ENCODE measurements at regions of chr9 and their contacts with region 1.

Region 1: DNA sequence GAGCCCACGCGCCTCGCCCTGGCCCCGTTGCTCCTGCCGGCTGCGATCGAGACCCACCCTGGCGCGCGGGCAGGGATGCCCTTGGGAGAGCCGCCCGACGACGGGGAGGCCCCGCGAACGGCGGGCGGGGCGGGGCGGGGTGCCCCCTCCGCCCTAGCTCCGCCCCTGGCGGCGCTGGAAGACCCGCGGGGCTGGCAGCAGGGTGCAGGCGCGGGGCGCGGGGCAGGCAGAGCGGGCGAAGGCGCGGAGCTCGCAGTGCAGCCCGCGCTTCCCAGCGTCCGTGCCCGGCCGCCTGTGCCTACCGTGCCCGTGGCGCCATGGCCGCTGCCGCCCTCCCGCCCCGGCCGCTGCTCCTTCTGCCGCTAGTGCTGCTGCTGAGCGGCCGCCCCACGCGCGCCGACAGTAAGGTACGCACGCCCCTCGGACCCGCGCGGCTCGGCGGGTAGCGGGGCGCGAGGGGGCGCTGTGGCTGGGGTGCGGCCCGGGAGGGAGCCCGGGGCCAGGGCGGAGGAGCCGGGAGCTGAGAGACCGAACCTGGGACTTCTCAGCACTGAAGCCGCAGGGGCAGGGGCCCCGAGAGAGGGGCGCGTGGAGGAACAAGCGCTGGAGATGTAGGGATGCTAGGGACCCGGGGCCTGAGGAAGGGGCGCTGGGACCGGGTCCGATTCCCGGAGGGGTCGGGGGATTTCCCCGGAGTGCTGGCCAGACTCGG is at the start of gene OLFML2A:
- DNase-seq: no peak
- ATAC-seq: peak; percentile 66
- H3K4me3 ChIP-seq: peak within 1 kb of the TSS; percentile 48 to 64
- H3K27ac ChIP-seq: peak within 1 kb of the TSS; percentile 44; the same call in 1 of the 2 replicates
- H3K4me1 ChIP-seq: peaks cover 17 to 40% of the 10 kb centered on the region in 2 experiments
- H3K27me3 ChIP-seq: no peaks in the 10 kb centered on the region
- CTCF ChIP-seq: peak in 2 of 3 experiments; percentile 44 to 53; a peak in 3 of 6 replicates
- POLR2A ChIP-seq: no peak
- RAD21 ChIP-seq: no peak
- total RNA-seq, gene OLFML2A: 6.3 TPM

Region 2: GRCh38 chr9:124818431-124819281 is 41.5 kb after region 1 on chr9:
- CTCF ChIA-PET with region 1: interaction called, 10 read pairs
- POLR2A ChIA-PET with region 1: interaction called, 6 read pairs
- RAD21 ChIA-PET with region 1: interaction called in 1 of 2 experiments, 3 read pairs
- intact Hi-C with region 1: loop called (anchors 5 kb)
- DNase-seq: peak; percentile 82
- ATAC-seq: peak; percentile 87
- H3K4me3 ChIP-seq: peak overlapping the region in 1 of 2 experiments; percentile 15; a peak in 1 of 4 replicates
- H3K27ac ChIP-seq: peak overlapping the region; percentile 69
- H3K4me1 ChIP-seq: peaks cover 29 to 61% of the 10 kb centered on the region in 2 experiments
- H3K27me3 ChIP-seq: no peaks in the 10 kb centered on the region
- CTCF ChIP-seq: peak in 1 of 3 experiments; percentile 24; a peak in 2 of 6 replicates
- POLR2A ChIP-seq: no peak
- RAD21 ChIP-seq: no peak

Region 3: GRCh38 chr9:125089331-125089730 is 312.2 kb after region 1 on chr9:
- CTCF ChIA-PET with region 1: no interaction called
- POLR2A ChIA-PET with region 1: no interaction called
- RAD21 ChIA-PET with region 1: no interaction called
- intact Hi-C with region 1: no loop called
- DNase-seq: no peak
- ATAC-seq: no peak
- H3K4me3 ChIP-seq: no peak overlapping the region
- H3K27ac ChIP-seq: no peak overlapping the region
- H3K4me1 ChIP-seq: no peaks in the 10 kb centered on the region
- H3K27me3 ChIP-seq: no peaks in the 10 kb centered on the region
- CTCF ChIP-seq: no peak
- POLR2A ChIP-seq: no peak
- RAD21 ChIP-seq: no peak